Activated CD4-positive, alpha-beta T cell treated with anti-CD3 and anti-CD28 coated beads for 36 hours (primary cell): ENCODE measurements at regions of chr6 and their contacts with region 1.

Region 1: DNA sequence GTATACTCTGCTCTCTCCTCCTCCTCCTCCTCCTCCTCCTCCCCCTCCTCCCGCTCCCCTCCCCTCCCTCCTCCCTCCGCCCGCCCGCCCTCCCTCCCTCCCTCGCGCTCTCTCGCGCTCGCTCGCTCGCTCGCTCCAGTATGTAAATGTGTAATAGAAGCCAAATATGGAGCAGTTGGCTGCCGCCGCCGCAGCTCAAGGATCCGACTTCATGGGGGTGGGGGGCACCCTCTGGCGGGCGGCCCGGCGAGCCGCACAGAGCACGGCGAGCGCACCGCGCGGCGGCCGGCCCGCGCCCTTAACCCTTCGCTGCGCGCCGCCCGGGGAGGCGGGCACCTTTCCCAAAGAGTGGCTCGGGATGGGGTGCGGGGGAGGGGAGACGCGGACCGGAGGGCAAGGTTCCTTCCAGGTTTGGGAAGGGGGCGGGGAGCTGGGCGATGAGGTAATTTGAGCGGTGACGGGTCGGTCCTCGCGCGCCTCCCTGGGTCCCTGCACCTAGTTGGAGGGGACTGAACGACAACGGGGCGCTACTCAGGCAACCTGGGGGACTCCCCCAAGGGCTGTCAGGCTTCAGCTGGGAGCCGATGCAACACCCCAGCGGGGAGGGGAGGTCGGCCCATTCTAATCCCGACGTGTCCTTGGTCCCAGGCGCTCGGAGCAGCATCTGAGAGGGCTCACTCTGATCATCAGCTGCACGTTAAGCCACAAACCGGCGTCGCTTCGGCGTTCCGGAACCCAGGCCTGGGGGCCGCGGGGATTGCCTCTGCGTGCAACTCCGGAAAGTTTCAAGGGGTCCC is 409 bp upstream of the ATXN1 start:
- DNase-seq: peak; percentile 91
- ATAC-seq: peak; percentile 60
- H3K4me3 Mint-ChIP-seq: peak overlapping the region; percentile 91
- H3K27ac Mint-ChIP-seq: peak overlapping the region; percentile 94
- H3K4me1 Mint-ChIP-seq: peaks cover 58% of the 10 kb centered on the region
- H3K27me3 Mint-ChIP-seq: no peaks in the 10 kb centered on the region

Region 2: DNA sequence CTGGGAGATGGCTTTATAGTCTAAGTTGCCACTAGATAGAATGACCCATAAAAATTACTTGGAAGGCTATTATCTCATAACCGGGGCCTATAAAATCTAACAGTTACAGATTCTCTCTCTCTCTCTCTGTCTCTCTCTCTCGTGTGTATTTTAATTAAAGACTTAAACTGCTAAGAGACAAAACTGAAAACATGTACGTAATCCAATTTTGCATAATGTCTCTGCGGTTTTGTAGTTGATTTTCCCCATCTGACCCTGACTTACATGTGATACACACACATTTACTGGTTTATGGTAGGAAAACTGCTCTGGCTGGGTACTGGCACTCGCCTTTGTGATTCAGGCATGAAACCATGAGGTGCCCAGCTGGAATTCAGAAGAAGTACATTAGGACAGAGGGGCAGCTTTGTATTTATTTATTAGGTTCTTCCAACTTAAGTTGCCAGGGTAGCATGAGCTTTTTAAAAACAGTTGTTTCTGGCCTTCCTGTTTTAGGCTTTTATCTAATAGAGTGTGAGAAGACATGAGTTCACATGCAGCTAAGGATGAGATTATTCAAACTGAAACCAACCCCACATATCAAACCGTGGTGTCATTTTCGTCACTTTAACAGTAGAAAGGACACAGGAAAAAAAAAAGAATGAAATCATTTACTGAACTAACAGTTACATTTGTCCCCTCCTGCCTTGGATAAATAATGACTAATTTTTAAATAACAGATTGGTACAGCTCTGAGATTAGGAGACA is 340.8 kb before region 1 on chr6:
- CTCF ChIA-PET with region 1: interaction called, 8 read pairs
- POLR2A ChIA-PET with region 1: no interaction called
- intact Hi-C with region 1: loop called in 1 of 2 experiments (anchors 2 kb)
- DNase-seq: peak; percentile 66
- ATAC-seq: peak; percentile 82
- H3K4me3 Mint-ChIP-seq: peak overlapping the region; percentile 58
- H3K27ac Mint-ChIP-seq: peak overlapping the region; percentile 94
- H3K4me1 Mint-ChIP-seq: peaks cover 53% of the 10 kb centered on the region
- H3K27me3 Mint-ChIP-seq: no peaks in the 10 kb centered on the region

Region 3: GRCh38 chr6:16602035-16602434 is 159.6 kb before region 1 on chr6:
- CTCF ChIA-PET with region 1: no interaction called
- POLR2A ChIA-PET with region 1: interaction called, 10 read pairs
- intact Hi-C with region 1: loop called in 1 of 2 experiments (anchors 5 kb)
- DNase-seq: peak; percentile 78
- ATAC-seq: peak; percentile 99
- H3K4me3 Mint-ChIP-seq: no peak overlapping the region
- H3K27ac Mint-ChIP-seq: peak overlapping the region; percentile 55
- H3K4me1 Mint-ChIP-seq: peaks cover 42% of the 10 kb centered on the region
- H3K27me3 Mint-ChIP-seq: peaks cover 3% of the 10 kb centered on the region

Region 4: GRCh38 chr6:16704401-16705045 is 57.1 kb before region 1 on chr6:
- CTCF ChIA-PET with region 1: interaction called, 34 read pairs
- POLR2A ChIA-PET with region 1: interaction called, 8 read pairs
- intact Hi-C with region 1: loop called in 1 of 2 experiments (anchors 2 kb)
- DNase-seq: peak; percentile 86
- ATAC-seq: peak; percentile 88
- H3K4me3 Mint-ChIP-seq: peak overlapping the region; percentile 74
- H3K27ac Mint-ChIP-seq: peak overlapping the region; percentile 83
- H3K4me1 Mint-ChIP-seq: peaks cover 69% of the 10 kb centered on the region
- H3K27me3 Mint-ChIP-seq: no peaks in the 10 kb centered on the region

Region 5: GRCh38 chr6:16776394-16777017 is 14.8 kb after region 1 on chr6:
- CTCF ChIA-PET with region 1: interaction called, 32 read pairs
- POLR2A ChIA-PET with region 1: no interaction called
- intact Hi-C with region 1: no loop called
- DNase-seq: no peak
- ATAC-seq: no peak
- H3K4me3 Mint-ChIP-seq: no peak overlapping the region
- H3K27ac Mint-ChIP-seq: no peak overlapping the region
- H3K4me1 Mint-ChIP-seq: peaks cover under 1% of the 10 kb centered on the region
- H3K27me3 Mint-ChIP-seq: peaks cover 2% of the 10 kb centered on the region

Region 6: DNA sequence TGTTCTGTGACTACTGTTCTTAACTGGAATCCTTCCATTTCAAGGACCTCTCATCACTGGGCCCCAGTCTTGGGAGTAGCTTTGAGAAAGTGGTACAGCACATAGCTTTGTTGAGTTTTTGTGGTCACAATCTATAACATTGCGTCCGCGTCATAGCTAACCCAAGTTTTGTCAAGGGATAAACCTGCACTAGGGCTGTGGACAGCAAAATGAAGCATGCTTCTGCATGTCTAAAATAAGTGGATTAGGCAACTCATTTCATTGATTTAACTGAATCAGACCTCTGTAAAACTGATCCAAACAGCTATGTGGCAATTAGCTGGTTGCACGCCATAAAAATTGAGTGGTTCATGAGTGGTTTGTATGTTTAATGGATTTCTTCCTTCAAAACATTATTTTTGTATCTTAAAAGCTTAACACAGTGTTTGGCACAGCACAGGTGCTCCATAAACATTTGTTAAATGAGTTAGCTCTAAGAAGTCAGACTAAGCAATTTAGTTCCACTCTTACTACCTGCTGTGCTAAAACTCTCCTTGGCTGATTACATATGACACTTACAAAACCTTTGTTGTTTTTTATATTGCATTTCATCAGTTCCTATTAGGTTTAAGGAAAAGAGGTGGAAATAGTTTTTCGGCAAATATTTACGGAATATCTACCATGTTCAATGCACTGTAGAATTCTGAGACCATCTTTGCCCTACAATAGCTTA is 159.9 kb after region 1 on chr6:
- CTCF ChIA-PET with region 1: no interaction called
- POLR2A ChIA-PET with region 1: no interaction called
- intact Hi-C with region 1: no loop called
- DNase-seq: no peak
- ATAC-seq: no peak
- H3K4me3 Mint-ChIP-seq: no peak overlapping the region
- H3K27ac Mint-ChIP-seq: no peak overlapping the region
- H3K4me1 Mint-ChIP-seq: no peaks in the 10 kb centered on the region
- H3K27me3 Mint-ChIP-seq: peaks cover 12% of the 10 kb centered on the region

Region 7: DNA sequence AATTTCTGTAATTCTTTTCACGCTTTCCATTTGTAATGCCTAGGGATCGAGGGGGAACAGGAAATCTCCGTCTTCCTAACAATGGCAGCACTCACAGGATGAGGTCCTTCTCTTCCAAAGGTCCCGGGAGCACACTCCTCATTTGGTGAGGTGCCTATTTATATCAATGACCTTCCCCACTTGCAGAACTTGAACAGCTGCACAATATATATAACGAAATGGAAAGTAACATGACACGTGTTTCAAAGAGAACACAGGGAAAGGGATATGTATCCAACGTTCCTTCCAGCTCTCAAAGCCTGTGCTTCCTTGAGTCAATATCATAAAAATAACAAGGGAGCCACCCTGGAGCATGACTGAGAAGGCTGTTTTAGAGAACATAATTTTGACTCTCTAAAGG is 440.9 kb after region 1 on chr6:
- CTCF ChIA-PET with region 1: no interaction called
- POLR2A ChIA-PET with region 1: no interaction called
- intact Hi-C with region 1: no loop called
- DNase-seq: no peak
- ATAC-seq: no peak
- H3K4me3 Mint-ChIP-seq: no peak overlapping the region
- H3K27ac Mint-ChIP-seq: no peak overlapping the region
- H3K4me1 Mint-ChIP-seq: no peaks in the 10 kb centered on the region
- H3K27me3 Mint-ChIP-seq: peaks cover 5% of the 10 kb centered on the region

Region 8: DNA sequence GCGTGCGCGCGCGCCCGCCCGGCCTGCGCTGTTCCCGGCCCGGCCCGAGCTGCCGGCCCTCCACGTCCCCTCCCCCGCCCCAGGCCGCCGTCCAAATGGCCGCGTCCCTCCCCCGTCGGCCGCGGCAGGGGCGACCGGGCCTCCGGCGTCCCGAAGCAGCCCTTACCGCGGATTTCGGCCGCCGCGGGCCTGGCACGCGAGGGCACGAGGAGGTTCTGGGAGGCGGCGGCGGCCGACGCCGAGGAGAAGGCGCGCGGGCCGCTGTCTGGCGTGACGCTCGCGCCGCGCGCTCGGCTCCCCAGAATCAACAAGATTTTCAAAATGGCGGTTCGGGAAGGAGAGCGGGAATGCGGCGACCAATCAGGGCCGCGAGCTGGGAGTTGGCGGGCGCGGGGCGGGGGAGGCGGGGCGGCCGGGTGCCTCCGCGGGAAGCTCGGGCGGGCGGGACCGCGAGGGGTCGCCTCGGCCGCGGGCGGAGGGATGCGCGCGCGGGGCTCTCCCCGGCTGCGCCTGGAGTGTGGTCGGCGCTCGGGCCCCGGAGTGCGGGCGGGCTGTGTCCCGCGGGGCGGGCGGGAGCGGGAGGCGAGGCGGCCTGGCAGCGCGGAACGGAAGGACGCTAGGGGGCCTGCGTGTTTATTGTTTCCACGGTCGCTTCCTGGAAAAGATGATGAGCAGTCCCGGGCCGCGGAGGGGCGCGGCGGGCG is 1502.7 kb after region 1 on chr6 and contains the start of gene DEK:
- CTCF ChIA-PET with region 1: no interaction called
- POLR2A ChIA-PET with region 1: no interaction called
- intact Hi-C with region 1: loop called in 1 of 2 experiments (anchors 5 kb)
- DNase-seq: peak; percentile 91
- ATAC-seq: peak; percentile 55
- H3K4me3 Mint-ChIP-seq: peak within 1 kb of the TSS; percentile 93
- H3K27ac Mint-ChIP-seq: peak within 1 kb of the TSS; percentile 99
- H3K4me1 Mint-ChIP-seq: peaks cover 48% of the 10 kb centered on the region
- H3K27me3 Mint-ChIP-seq: no peaks in the 10 kb centered on the region
- total RNA-seq, gene DEK: 201 to 273 TPM